Activated B cell treated with CpG ODN at 0.5 μM for 24 hours (primary cell): ENCODE measurements at regions of chr19 and their contacts with region 1.

Region 1: DNA sequence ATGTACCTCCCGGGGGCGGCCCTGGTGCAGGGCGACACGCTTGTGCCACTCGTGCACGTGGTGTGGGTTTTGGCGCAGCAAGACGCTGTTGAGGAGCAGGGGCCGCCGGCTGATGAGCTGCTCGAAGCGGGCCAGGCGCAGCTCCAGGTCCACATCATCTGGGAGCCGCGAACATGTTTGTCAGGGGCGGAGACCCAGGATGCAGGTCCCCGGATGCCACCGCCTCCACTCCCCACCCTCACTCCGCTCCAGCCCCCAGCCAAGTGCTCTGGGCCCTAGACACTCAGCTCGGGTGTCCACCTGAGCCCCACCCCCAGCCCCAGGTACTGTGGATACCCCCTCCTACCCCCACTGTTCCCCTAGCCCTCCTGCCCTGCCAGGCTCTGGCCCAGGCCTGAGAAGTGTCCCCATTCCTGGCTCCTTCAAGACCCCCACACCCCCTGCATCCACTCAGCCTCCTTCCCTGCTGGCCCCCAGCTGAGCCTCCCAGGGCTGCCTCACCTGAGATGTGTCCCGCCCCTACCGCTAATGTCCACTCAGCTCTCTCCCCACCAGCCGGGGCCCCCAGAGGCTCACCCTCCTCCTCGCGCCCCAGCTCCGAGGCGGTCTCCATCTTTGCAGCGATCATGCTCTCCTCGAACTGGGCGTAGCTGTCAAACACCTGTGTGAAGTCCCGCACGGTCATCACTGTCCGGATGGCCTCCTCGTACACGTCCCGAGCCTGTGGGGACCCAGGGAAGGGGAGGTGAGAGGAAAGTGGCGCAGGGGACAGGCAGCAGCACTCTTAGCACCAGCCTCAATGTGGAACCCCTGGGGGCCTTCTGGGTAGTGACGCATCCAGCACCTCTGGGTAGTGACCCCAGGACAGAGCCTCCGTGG is 5.4 kb downstream of the XAB2 start:
- DNase-seq: no peak
- ATAC-seq: no peak
- H3K4me3 Mint-ChIP-seq: no peak overlapping the region
- H3K27ac Mint-ChIP-seq: no peak overlapping the region
- H3K4me1 Mint-ChIP-seq: peaks cover 16% of the 10 kb centered on the region
- H3K27me3 Mint-ChIP-seq: no peaks in the 10 kb centered on the region
- CTCF ChIP-seq: no peak

Region 2: DNA sequence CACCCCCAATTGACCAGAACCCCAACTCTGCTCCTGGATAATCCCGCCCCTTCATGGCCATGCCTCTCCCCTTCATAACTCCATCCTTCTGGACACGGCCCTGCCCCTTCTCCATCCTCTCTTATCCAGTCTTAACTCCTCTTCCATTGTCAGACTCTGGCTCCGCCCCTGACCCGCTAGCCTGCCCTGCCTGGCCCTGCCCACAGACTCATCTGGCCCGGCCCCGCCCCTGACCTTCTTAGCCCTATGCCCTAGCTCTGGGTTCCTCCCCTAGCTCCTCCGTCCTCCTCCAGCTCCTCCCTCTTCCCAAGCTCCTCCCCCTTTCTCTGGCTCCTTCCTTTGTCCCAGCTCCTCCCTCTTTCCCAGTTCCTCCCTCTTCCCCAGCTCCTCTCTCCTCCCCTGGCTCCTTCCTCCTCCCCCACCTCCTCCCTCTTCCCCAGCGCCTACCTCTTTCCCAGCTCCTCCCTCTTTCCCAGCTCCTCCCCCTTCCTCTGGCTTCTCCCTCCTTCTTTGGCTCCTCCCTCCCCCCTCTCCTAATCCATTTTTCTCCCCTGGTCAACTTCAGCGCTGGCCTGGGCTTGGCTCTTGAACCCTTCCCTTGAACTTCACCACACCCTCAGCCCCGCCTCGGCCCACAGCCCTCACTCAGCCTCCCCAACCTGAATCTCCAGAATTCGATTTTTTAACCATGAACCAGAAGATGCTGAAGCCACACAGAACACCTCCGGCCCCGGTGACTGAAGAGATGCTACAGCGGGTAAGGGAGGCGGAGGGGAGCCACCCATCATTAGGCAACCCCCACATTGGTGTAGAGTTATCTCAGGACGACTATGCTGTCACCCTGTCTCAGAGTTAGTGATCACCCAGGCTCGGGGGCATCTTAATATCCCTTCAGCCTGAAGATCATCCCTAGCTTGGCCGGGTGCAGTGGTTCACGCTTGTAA is 117.3 kb before region 1 on chr19:
- CTCF ChIA-PET with region 1: no interaction called
- POLR2A ChIA-PET with region 1: no interaction called
- intact Hi-C with region 1: no loop called
- DNase-seq: no peak
- ATAC-seq: peak; percentile 78
- H3K4me3 Mint-ChIP-seq: no peak overlapping the region
- H3K27ac Mint-ChIP-seq: no peak overlapping the region
- H3K4me1 Mint-ChIP-seq: peaks cover 14% of the 10 kb centered on the region
- H3K27me3 Mint-ChIP-seq: peaks cover 31% of the 10 kb centered on the region
- CTCF ChIP-seq: no peak

Region 3: GRCh38 chr19:7607874-7608560 is 15.9 kb before region 1 on chr19:
- CTCF ChIA-PET with region 1: no interaction called
- POLR2A ChIA-PET with region 1: interaction called, 10 read pairs
- intact Hi-C with region 1: no loop called
- DNase-seq: no peak
- ATAC-seq: no peak
- H3K4me3 Mint-ChIP-seq: no peak overlapping the region
- H3K27ac Mint-ChIP-seq: no peak overlapping the region
- H3K4me1 Mint-ChIP-seq: no peaks in the 10 kb centered on the region
- H3K27me3 Mint-ChIP-seq: peaks cover 11% of the 10 kb centered on the region
- CTCF ChIP-seq: no peak

Region 4: DNA sequence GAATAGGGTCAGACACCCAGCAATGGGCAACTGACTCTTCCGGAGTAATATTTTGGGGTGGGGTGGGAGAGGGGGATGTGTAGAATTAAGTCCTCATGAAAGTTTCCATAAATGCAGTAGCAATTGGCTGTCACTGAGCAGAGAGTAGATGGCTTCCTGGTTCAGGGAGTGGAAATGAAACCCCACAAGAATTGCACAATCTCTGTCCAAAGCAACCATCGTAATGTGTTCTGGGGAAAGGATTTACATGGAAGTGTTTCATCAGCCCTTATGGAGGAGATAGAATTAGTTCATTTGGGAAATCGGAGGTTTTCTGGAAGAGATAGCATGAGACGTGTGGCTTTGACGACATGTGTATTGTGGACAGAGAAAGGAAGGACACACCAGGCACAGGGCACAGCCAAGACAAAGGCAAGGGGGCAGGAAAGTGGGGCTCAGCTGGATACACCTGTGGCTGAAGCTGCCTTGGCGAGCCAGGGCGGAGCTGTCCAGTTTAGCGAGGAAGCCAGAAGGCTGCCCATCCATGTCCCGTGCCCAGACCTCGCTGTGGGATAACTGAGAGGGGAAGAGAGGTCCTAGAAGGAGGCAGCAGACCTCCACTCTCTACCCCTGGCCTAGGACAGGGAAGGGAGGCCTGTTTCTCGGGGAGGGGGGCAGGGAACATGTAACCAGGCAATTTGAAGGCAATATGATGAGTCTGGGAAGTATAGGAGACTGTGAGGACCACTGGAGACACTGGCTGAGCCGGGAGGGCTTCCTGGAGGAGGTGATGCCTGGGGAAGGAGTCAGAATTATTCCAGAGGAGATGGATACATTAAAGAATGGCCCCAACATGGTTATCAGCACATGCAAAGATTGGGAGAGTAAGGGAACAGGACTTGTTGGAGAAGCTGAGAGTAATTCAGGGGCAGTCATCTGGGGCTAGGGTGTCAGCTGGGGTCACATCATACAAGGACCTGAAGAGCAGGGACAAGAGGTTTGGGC is 110.5 kb after region 1 on chr19:
- CTCF ChIA-PET with region 1: no interaction called
- POLR2A ChIA-PET with region 1: no interaction called
- intact Hi-C with region 1: no loop called
- DNase-seq: no peak
- ATAC-seq: no peak
- H3K4me3 Mint-ChIP-seq: no peak overlapping the region
- H3K27ac Mint-ChIP-seq: no peak overlapping the region
- H3K4me1 Mint-ChIP-seq: peaks cover 22% of the 10 kb centered on the region
- H3K27me3 Mint-ChIP-seq: peaks cover 12% of the 10 kb centered on the region
- CTCF ChIP-seq: no peak

Region 5: DNA sequence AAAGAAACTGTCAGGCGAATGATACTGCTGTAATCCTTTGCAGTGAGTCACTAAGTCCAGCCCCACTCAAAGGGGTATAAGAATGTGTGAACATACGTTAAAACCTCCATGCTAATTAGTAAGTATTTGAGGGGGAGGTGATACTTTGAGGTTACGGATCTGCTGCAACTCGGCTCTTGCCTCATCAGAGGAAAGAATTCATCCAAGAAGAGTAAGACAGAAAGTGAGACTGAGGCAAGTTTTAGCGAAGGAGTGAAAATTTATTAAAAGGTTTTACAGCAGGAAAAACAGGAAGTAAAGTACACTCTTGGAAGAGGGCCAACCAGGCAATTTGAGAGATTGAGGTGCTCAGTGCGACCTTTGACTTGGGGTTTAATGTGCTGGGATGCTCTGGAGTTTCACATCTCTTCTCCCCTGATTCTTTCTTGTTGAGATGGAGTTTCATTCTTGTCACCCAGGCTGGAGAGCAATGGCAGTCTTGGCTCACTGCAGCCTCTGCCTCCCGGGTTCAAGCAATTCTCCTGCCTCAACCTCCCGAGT is 148.9 kb after region 1 on chr19:
- CTCF ChIA-PET with region 1: no interaction called
- POLR2A ChIA-PET with region 1: no interaction called
- intact Hi-C with region 1: no loop called
- DNase-seq: no peak
- ATAC-seq: peak; percentile 65
- H3K4me3 Mint-ChIP-seq: no peak overlapping the region
- H3K27ac Mint-ChIP-seq: no peak overlapping the region
- H3K4me1 Mint-ChIP-seq: peaks cover 16% of the 10 kb centered on the region
- H3K27me3 Mint-ChIP-seq: peaks cover 6% of the 10 kb centered on the region
- CTCF ChIP-seq: no peak

Region 6: DNA sequence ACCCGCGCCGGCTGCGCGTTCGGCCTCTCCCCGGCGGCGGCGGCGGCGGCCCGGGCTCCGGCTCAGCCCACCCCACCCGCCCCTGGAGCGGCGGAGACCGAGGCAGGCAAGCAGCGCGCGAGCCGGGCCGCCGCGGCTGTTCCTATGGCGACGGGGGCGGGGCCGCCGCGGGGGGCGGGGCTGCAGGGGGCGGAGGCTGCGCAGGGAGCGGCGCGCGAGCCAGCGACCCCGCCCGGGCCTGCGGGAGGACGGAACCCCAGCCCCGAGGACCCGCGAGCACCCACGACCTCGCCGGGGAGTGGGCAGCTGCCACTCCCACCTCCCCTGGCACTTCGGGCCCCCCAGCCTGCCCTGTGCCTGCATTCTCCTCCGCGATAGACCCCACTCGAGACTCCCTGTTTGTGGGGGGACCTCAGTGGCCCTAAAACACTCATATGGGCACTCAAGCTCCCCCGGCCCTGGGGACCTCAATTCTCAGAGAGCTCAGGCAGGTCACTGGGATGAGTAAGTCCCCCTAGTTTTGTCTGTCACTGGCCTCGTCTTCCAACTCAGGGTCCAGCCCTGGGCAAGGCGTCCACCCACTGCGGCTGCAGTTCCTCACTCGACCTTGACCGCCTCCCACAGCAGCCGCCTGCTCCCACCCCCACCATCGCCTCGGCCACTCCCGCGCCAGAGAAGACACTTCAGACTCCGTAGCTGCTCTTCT is 302.2 kb after region 1 on chr19 and contains the start of gene CTXN1:
- CTCF ChIA-PET with region 1: no interaction called
- POLR2A ChIA-PET with region 1: no interaction called
- intact Hi-C with region 1: no loop called
- DNase-seq: peak; percentile 83
- ATAC-seq: peak; percentile 56
- H3K4me3 Mint-ChIP-seq: peak within 1 kb of the TSS; percentile 84
- H3K27ac Mint-ChIP-seq: no peak within 1 kb of the TSS
- H3K4me1 Mint-ChIP-seq: peaks cover 26% of the 10 kb centered on the region
- H3K27me3 Mint-ChIP-seq: peaks cover 1% of the 10 kb centered on the region
- CTCF ChIP-seq: no peak
- total RNA-seq, gene CTXN1: not detected in 2 replicates